ENCODE measurements at regions of chr11 and their contacts with region 1.

Region 1: GRCh38 chr11:66958232-66958955 is at the start of gene PC:
- DNase-seq: peak; percentile 100
- H3K4me3 Mint-ChIP-seq: peak within 1 kb of the TSS; percentile 65
- H3K27ac Mint-ChIP-seq: peak within 1 kb of the TSS; percentile 70
- H3K4me1 Mint-ChIP-seq: peaks cover 30% of the 10 kb centered on the region
- H3K27me3 Mint-ChIP-seq: no peaks in the 10 kb centered on the region
- CTCF ChIP-seq: no peak
- total RNA-seq, gene PC: 27.0 and 37.7 TPM in 2 replicates

Region 2: DNA sequence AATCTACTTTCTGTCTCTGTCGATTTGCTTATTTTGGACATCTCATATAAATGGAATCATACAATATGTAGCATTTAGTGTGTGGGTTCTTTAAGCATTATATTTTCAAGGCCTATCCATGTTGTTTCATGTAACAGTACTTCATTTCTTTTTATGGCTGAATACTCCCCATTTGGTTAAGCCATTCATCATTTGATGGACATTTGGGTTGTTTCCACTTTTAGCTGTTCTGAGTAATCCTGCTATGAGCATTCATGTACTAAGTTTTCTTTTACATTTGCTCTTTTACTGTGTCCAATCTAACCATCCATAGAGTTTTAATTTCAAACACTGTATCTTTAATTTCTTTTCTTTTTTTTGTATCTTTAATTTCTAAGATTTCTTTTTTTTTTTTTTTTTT is 173.8 kb before region 1 on chr11:
- CTCF ChIA-PET with region 1: no interaction called
- POLR2A ChIA-PET with region 1: no interaction called
- intact Hi-C with region 1: no loop called
- DNase-seq: no peak
- H3K4me3 Mint-ChIP-seq: no peak overlapping the region
- H3K27ac Mint-ChIP-seq: no peak overlapping the region
- H3K4me1 Mint-ChIP-seq: no peaks in the 10 kb centered on the region
- H3K27me3 Mint-ChIP-seq: no peaks in the 10 kb centered on the region
- CTCF ChIP-seq: no peak

Region 3: GRCh38 chr11:66855574-66856495 is 102.6 kb before region 1 on chr11:
- CTCF ChIA-PET with region 1: no interaction called
- POLR2A ChIA-PET with region 1: interaction called, 7 read pairs
- intact Hi-C with region 1: loop called (anchors 1 kb)
- DNase-seq: peak; percentile 85
- H3K4me3 Mint-ChIP-seq: peak overlapping the region; percentile 86
- H3K27ac Mint-ChIP-seq: no peak overlapping the region
- H3K4me1 Mint-ChIP-seq: peaks cover 6% of the 10 kb centered on the region
- H3K27me3 Mint-ChIP-seq: no peaks in the 10 kb centered on the region
- CTCF ChIP-seq: no peak

Region 4: GRCh38 chr11:66891851-66892660 is 66.3 kb before region 1 on chr11:
- CTCF ChIA-PET with region 1: no interaction called
- POLR2A ChIA-PET with region 1: interaction called, 36 read pairs
- intact Hi-C with region 1: loop called (anchors 5 kb)
- DNase-seq: peak; percentile 98
- H3K4me3 Mint-ChIP-seq: peak overlapping the region; percentile 61
- H3K27ac Mint-ChIP-seq: peak overlapping the region; percentile 92
- H3K4me1 Mint-ChIP-seq: peaks cover 23% of the 10 kb centered on the region
- H3K27me3 Mint-ChIP-seq: no peaks in the 10 kb centered on the region
- CTCF ChIP-seq: no peak

Region 5: GRCh38 chr11:66970808-66971442 is 12.5 kb after region 1 on chr11:
- CTCF ChIA-PET with region 1: interaction called, 7 read pairs
- POLR2A ChIA-PET with region 1: interaction called, 61 read pairs
- intact Hi-C with region 1: no loop called
- DNase-seq: peak; percentile 100
- H3K4me3 Mint-ChIP-seq: peak overlapping the region; percentile 7
- H3K27ac Mint-ChIP-seq: peak overlapping the region; percentile 87
- H3K4me1 Mint-ChIP-seq: peaks cover 56% of the 10 kb centered on the region
- H3K27me3 Mint-ChIP-seq: no peaks in the 10 kb centered on the region
- CTCF ChIP-seq: no peak

Region 6: DNA sequence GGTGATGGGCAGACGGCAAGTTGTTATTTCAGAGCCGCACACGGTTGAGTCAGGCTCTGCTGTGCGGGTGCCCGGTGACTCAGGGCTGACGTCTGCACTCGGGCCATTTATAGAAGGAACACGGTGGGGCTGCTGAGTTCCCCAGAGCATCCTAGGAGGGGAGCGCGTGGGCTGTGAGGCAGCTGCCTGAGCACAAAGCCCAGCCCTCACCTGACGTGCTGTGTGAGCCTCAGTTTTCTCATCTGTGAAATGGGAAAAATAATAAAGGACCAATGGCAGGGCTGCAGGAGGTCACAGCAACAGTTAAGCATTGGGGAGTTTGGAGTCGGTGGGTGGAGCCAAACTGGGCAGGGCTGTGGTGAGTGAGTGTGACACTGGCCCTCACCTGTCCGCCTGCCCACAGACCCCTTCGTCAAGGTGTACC is 87.0 kb after region 1 on chr11:
- CTCF ChIA-PET with region 1: no interaction called
- POLR2A ChIA-PET with region 1: interaction called, 3 read pairs
- intact Hi-C with region 1: loop called (anchors 2 kb)
- DNase-seq: peak; percentile 92
- H3K4me3 Mint-ChIP-seq: no peak overlapping the region
- H3K27ac Mint-ChIP-seq: no peak overlapping the region
- H3K4me1 Mint-ChIP-seq: peaks cover 5% of the 10 kb centered on the region
- H3K27me3 Mint-ChIP-seq: peaks cover 14% of the 10 kb centered on the region
- CTCF ChIP-seq: no peak

Measured in MCF 10A (cell line).